Sciatic nerve (tissue), 2 donors: ENCODE measurements at regions of chr6 and their contacts with region 1.

Region 1: DNA sequence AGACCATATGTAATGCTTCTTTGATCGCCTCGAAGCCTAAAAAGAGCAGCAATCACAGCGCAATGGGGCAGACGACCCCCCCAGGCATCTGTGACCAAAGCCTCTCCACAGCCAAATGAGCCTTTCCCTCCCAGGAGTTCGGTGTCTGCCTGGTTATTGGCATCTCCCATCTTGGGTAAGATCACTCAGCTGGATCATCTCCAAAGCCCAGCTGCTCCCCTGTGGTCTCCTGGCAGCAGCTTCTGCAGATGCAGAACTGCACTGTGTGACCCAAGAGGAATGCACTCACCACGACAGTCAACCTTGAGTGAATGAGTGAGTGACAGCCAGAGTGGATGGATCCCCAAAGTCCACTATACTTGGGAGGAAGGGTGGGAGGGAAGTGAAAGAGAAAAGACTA is 44.8 kb upstream of the IYD start:
- DNase-seq: no peak
- ATAC-seq: no peak

Region 2: DNA sequence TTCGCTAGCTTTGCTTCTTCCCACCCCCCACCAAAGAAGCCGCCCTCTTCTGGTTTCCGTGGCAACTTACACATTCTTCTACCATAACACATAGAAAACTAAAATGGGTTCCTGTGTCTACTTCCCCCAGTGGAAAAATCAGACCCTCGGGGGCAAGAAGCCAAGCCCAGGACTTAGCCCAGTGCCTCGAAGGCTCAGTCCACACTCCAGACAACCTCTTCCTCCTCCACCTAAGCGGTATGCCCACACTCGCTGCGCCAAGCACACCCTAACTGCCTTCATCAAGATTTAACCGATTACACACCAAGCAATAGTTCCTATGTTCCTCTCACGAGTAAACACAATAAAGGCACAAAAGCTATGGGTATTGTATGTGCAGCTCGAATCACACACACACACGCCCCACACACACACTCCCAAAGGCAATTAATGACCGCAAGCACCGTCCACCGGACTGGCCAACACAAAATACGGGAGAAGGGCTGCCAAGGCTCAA is 778.7 kb before region 1 on chr6:
- intact Hi-C with region 1: no loop called
- DNase-seq: peak; percentile 65
- ATAC-seq: peak; percentile 59

Region 3: DNA sequence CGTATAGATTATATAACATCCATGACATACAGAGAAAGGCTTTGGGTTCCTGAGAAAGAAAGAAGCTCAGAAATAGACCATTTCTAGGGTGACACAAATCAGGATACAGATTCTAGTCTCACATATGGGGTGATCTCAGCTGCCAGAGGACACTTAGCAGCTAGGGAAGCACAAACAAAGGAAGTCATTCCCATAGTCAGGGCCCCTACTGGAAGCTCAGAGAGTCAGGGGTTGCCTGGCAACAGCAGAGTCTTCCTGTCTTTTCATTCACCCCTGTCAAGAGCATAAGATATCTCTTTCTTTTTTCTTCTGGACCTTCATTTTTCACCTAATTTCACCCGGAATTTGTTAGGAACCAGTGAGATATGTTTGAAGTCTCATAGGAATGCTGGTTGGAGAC is 37.1 kb before region 1 on chr6:
- intact Hi-C with region 1: no loop called
- DNase-seq: no peak
- ATAC-seq: no peak

Region 4: DNA sequence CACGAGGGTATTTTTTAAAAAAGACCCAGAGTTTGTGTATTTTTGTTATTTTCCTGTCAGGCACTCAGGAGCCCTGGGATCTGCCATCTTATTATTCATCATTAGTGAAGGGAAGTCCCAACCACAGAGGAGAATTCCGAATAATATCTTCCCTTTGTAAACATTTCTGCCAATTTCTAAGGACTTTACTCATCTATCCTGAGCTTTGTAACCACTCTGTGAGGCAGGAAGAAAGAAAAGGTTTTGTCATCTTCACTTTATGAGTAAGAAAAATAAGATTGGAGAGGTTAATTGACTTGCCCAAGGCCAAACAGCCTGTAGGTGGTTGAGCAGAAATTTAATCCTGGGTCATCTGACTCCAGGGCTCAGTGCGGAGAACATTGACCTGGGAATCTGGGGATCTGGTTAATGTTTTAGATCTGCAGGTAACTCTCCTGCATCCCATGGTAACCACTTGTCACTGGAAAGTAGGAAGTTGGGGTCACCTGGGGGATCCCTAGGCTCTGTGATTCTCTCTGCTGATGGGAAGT is 21.8 kb after region 1 on chr6:
- intact Hi-C with region 1: loop called (anchors 1 kb)
- DNase-seq: no peak
- ATAC-seq: no peak

Region 5: DNA sequence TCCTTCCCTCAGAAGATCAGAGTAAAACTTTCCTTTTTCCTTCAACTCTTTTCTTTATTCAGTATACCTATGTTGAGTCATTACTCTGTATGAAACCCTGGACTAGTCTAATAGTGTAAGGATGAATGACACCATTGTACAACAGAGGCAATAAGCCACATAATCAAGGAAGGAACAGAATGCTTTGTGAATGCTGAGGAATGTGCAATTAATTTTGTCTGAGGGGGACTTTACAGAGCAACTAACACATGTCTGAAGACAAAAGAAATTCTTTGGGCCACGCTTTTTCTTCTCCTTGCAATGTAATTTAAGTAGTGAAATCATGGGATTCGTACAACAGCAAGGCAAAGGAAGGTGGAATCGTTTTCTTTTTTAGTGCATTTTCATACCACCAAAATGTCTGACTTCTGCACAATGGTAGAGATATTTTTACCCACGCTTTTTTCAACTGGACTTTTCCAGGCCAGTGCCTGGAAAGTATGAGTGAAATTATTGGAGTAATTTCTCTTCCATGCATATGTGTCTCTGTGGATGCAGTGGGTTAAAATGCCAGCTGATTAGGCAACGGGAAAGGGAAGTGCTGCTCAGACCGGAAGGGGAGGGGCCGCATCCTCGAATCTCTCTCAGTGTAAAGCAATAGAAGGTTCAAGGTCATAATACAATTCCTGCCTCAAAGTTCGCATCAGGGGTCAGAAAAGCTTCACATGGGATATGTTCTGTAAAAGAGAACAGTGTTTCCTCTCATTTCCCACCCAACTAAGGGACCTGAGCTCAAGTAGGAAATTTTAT is 451.6 kb after region 1 on chr6:
- intact Hi-C with region 1: no loop called
- DNase-seq: no peak
- ATAC-seq: peak; percentile 48